GM12878 (cell line): ENCODE measurements at regions of chr3 and their contacts with region 1.

Region 1: GRCh38 chr3:58568572-58569286 is 8.5 kb downstream of the FAM107A start:
- DNase-seq: peak; percentile 19
- ATAC-seq: peak; percentile 86
- H3K4me3 ChIP-seq: no peak overlapping the region
- H3K27ac ChIP-seq: no peak overlapping the region
- H3K4me1 ChIP-seq: 0 out of 2 replicates have a peak, but pooled peaks cover 3% of the 10 kb centered on the region
- H3K27me3 ChIP-seq: no peaks in the 10 kb centered on the region; a peak in 1 of 4 replicates
- CTCF ChIP-seq: peak; percentile 83 to 86 (median 84)
- EP300 ChIP-seq: no peak
- POLR2A ChIP-seq: no peak
- RAD21 ChIP-seq: peak; percentile 75

Region 2: DNA sequence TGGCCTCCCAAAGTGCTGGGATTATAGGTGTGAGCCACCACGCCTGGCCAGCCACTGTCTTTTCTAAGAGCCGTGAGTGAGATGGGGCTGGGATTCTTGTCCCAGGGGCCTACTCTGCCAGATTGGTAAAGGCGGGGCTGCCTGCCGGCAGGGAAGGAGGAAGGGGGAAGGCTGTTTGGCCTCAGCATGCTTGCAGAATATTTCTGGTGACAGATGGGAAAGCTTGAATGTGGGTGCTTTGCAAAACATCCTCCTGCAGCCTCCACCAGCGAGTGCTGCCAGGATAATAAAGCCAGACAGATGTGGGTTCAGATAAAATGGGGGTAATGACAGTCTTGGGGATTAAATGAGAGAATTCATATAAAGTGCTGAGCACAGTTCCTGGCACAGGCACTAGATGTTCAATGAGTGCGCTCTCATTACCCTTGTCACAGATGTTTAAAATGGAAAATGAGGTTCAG is 11.9 kb before region 1 on chr3:
- CTCF ChIA-PET with region 1: interaction called, 32 read pairs
- POLR2A ChIA-PET with region 1: no interaction called
- RAD21 ChIA-PET with region 1: interaction called, 5 read pairs
- SMC1A ChIA-PET with region 1: interaction called, 4 read pairs
- in situ Hi-C with region 1: no loop called
- intact Hi-C with region 1: no loop called
- DNase-seq: no peak
- ATAC-seq: no peak
- H3K4me3 ChIP-seq: no peak overlapping the region
- H3K27ac ChIP-seq: no peak overlapping the region
- H3K4me1 ChIP-seq: no peaks in the 10 kb centered on the region
- H3K27me3 ChIP-seq: 0 out of 4 replicates have a peak, but pooled peaks cover 0 to 3% of the 10 kb centered on the region in 2 experiments
- CTCF ChIP-seq: no peak
- EP300 ChIP-seq: no peak
- POLR2A ChIP-seq: no peak
- RAD21 ChIP-seq: no peak

Region 3: GRCh38 chr3:58630076-58630709 is 61.5 kb after region 1 on chr3:
- CTCF ChIA-PET with region 1: interaction called, 243 read pairs
- POLR2A ChIA-PET with region 1: interaction called, 3 read pairs
- RAD21 ChIA-PET with region 1: interaction called, 100 read pairs
- SMC1A ChIA-PET with region 1: interaction called, 54 read pairs
- in situ Hi-C with region 1: loop called (anchors 5 kb)
- intact Hi-C with region 1: loop called (anchors 1 kb)
- DNase-seq: no peak
- ATAC-seq: peak; percentile 87
- H3K4me3 ChIP-seq: no peak overlapping the region
- H3K27ac ChIP-seq: no peak overlapping the region
- H3K4me1 ChIP-seq: no peaks in the 10 kb centered on the region
- H3K27me3 ChIP-seq: peaks cover 2 to 3% of the 10 kb centered on the region in 2 experiments; a peak in 1 of 4 replicates
- CTCF ChIP-seq: peak; percentile 87 to 89 (median 88)
- EP300 ChIP-seq: no peak
- POLR2A ChIP-seq: no peak
- RAD21 ChIP-seq: peak; percentile 83